CD4-positive, alpha-beta T cell (primary cell): ENCODE measurements at regions of chr6 and their contacts with region 1.

Region 1: GRCh38 chr6:136792410-136793262 is at the start of gene MAP3K5:
- DNase-seq: peak; percentile 89 to 97 (median 96)
- ATAC-seq: peak; percentile 79
- H3K4me3 ChIP-seq: peak within 1 kb of the TSS; percentile 74
- H3K4me3 Mint-ChIP-seq: peak within 1 kb of the TSS; percentile 97
- H3K27ac ChIP-seq: peak within 1 kb of the TSS; percentile 88 to 98
- H3K27ac Mint-ChIP-seq: peak within 1 kb of the TSS; percentile 99
- H3K4me1 ChIP-seq: peaks cover 22% of the 10 kb centered on the region
- H3K4me1 Mint-ChIP-seq: peaks cover 40% of the 10 kb centered on the region
- H3K27me3 ChIP-seq: no peaks in the 10 kb centered on the region
- H3K27me3 Mint-ChIP-seq: no peaks in the 10 kb centered on the region
- CTCF ChIP-seq: peak; percentile 93
- total RNA-seq, gene MAP3K5: 12.9 to 14.1 TPM

Region 2: DNA sequence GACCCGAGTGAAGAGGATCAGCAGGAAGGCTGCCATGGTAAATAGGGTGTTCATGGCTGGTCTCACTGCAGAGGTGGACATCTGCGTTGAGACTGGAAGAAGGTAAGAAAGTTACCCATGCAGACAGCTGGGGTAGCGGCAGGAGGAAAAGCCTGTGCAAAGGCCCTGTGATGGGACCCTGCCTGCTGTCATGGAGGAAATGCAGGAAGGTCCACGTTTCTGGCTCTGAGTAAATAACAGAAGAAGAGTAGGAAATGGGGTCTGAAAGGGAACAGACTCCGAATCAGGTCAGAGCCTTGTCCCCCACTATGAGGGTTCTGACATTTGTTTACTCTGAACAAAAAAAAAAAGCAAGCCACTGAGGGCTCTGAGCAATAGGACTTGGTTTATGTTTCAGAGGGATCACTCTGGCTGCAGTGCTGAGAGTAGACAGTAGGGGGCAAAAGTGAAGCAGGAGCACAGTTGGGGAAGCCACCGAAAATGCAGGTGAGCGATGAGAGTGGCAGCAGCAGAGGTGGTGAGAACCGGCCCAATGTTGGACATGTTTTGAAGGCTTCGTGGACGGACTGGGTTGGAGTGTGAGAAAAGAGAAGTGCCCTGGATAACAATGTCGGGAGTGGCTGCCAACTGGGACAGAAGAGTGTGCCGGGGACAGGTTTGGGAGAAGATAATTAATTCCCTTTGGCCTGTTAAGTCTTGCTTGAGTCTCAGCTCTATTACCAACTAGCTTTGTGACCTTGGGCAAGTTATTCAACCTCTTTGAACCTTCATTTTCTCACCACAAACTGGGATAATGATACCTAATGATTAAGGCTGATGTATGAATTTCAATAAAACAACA is 184.5 kb before region 1 on chr6:
- CTCF ChIA-PET with region 1: interaction called, 10 read pairs
- POLR2A ChIA-PET with region 1: interaction called, 4 read pairs
- intact Hi-C with region 1: loop called (anchors 1 kb)
- DNase-seq: peak; percentile 60 to 85 (median 74)
- ATAC-seq: peak; percentile 99
- H3K4me3 ChIP-seq: no peak overlapping the region
- H3K4me3 Mint-ChIP-seq: no peak overlapping the region
- H3K27ac ChIP-seq: no peak overlapping the region
- H3K27ac Mint-ChIP-seq: no peak overlapping the region
- H3K4me1 ChIP-seq: peaks cover 2% of the 10 kb centered on the region
- H3K4me1 Mint-ChIP-seq: no peaks in the 10 kb centered on the region
- H3K27me3 ChIP-seq: no peaks in the 10 kb centered on the region
- H3K27me3 Mint-ChIP-seq: no peaks in the 10 kb centered on the region
- CTCF ChIP-seq: peak; percentile 82

Region 3: GRCh38 chr6:136669299-136669699 is 123.3 kb before region 1 on chr6:
- CTCF ChIA-PET with region 1: interaction called, 30 read pairs
- POLR2A ChIA-PET with region 1: interaction called, 13 read pairs
- intact Hi-C with region 1: no loop called
- DNase-seq: no peak
- ATAC-seq: no peak
- H3K4me3 ChIP-seq: no peak overlapping the region
- H3K4me3 Mint-ChIP-seq: no peak overlapping the region
- H3K27ac ChIP-seq: no peak overlapping the region
- H3K27ac Mint-ChIP-seq: no peak overlapping the region
- H3K4me1 ChIP-seq: no peaks in the 10 kb centered on the region
- H3K4me1 Mint-ChIP-seq: no peaks in the 10 kb centered on the region
- H3K27me3 ChIP-seq: no peaks in the 10 kb centered on the region
- H3K27me3 Mint-ChIP-seq: no peaks in the 10 kb centered on the region
- CTCF ChIP-seq: no peak

Region 4: GRCh38 chr6:136723780-136724179 is 68.9 kb before region 1 on chr6:
- CTCF ChIA-PET with region 1: interaction called, 39 read pairs
- POLR2A ChIA-PET with region 1: interaction called, 6 read pairs
- intact Hi-C with region 1: loop called in 1 of 2 experiments (anchors 10 kb)
- DNase-seq: peak in 12 of 14 experiments; percentile 9 to 65 (median 40)
- ATAC-seq: peak; percentile 75
- H3K4me3 ChIP-seq: no peak overlapping the region
- H3K4me3 Mint-ChIP-seq: no peak overlapping the region
- H3K27ac ChIP-seq: no peak overlapping the region
- H3K27ac Mint-ChIP-seq: no peak overlapping the region
- H3K4me1 ChIP-seq: peaks cover 22% of the 10 kb centered on the region
- H3K4me1 Mint-ChIP-seq: peaks cover 28% of the 10 kb centered on the region
- H3K27me3 ChIP-seq: no peaks in the 10 kb centered on the region
- H3K27me3 Mint-ChIP-seq: no peaks in the 10 kb centered on the region
- CTCF ChIP-seq: no peak

Region 5: GRCh38 chr6:136751522-136751956 is 41.1 kb before region 1 on chr6:
- CTCF ChIA-PET with region 1: interaction called, 44 read pairs
- POLR2A ChIA-PET with region 1: interaction called, 110 read pairs
- intact Hi-C with region 1: loop called (anchors 1 to 2 kb)
- DNase-seq: peak in 5 of 14 experiments; percentile 41 to 85 (median 68)
- ATAC-seq: peak; percentile 53
- H3K4me3 ChIP-seq: peak overlapping the region; percentile 27
- H3K4me3 Mint-ChIP-seq: peak overlapping the region; percentile 53
- H3K27ac ChIP-seq: peak overlapping the region; percentile 32 to 77
- H3K27ac Mint-ChIP-seq: peak overlapping the region; percentile 74
- H3K4me1 ChIP-seq: peaks cover 71% of the 10 kb centered on the region
- H3K4me1 Mint-ChIP-seq: peaks cover 84% of the 10 kb centered on the region
- H3K27me3 ChIP-seq: no peaks in the 10 kb centered on the region
- H3K27me3 Mint-ChIP-seq: no peaks in the 10 kb centered on the region
- CTCF ChIP-seq: no peak

Region 6: DNA sequence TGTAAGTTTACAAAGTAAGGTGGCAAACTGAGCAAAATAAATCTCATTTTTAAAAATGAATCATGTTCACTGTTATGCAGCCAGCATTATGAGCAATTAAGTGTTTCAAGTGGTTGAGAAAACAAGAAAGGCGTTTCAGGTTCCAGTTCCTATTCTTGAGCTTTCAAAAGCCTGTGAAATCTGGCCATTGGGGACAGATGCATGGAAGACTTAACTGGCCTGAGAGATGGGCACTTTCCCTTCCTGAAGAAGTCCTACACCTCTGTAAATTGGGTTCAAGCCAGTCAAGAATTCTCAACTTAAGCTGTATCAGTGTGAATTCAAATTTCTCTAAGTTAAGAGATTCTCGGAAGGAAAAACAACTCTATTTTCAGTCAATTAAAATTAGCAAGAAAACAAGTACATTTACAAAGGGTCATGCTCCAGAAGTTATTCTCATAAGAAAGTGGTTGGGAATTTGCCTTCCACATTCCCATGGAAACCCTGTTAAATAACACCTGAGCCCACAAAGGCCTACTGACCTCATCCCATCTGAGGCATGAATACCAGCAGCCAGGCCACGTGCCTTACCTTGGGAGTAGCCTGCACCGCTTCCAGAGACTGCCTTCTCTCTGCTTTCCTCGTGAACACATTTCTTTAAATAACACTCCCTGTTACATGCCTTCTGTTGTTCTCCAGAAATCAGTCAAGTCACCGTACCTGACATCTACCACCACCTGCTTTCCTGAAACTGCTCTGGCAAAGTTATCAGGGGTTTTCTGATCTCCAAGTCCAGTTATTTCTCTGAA is 19.8 kb before region 1 on chr6:
- CTCF ChIA-PET with region 1: interaction called, 23 read pairs
- POLR2A ChIA-PET with region 1: interaction called, 5 read pairs
- intact Hi-C with region 1: loop called in 1 of 2 experiments (anchors 2 kb)
- DNase-seq: no peak
- ATAC-seq: no peak
- H3K4me3 ChIP-seq: no peak overlapping the region
- H3K4me3 Mint-ChIP-seq: no peak overlapping the region
- H3K27ac ChIP-seq: no peak overlapping the region
- H3K27ac Mint-ChIP-seq: peak overlapping the region; percentile 27
- H3K4me1 ChIP-seq: peaks cover 44% of the 10 kb centered on the region
- H3K4me1 Mint-ChIP-seq: peaks cover 61% of the 10 kb centered on the region
- H3K27me3 ChIP-seq: no peaks in the 10 kb centered on the region
- H3K27me3 Mint-ChIP-seq: no peaks in the 10 kb centered on the region
- CTCF ChIP-seq: no peak